WTC11 (cell line): ENCODE measurements at regions of chr10 and their contacts with region 1.

Region 1: DNA sequence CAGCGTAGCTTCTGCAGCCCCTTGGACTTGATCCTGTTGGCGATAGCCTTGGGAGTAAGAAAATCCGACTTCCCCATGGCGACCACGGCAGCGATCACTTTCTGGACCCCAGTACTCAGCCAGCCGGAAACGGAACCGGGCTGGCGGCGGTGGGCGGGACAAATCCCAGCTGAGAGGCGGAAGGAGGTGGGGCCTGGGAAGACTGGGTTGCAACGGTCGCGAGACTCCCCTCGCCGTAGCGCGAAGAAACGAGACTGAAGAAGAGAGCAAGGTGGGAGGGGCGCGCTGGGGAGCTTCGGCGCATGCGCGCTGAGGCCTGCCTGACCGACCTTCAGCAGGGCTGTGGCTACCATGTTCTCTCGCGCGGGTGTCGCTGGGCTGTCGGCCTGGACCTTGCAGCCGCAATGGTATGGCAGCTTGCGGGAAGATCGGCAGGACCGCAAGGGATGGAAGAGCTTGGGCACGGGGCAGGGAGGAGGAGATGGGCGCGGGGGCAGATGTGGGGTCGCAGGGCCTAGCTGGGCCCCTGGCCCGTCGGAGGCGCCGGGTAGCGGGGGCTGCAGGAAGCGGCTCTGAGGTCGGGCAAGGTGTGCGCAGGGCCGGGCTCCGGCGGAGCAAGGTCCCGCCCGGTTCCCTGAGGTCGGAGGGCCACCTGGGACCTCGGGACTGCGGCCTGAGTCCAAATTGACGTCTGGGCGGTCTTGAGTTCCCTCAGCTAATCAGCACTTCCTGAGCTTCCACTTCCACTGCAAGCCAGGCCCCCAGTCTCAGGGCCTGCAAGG is at the starts of genes ATP5F1C and KIN:
- DNase-seq: peak; percentile 98
- ATAC-seq: peak; percentile 97
- H3K4me3 Mint-ChIP-seq: no peak within 1 kb of the TSS
- H3K27ac Mint-ChIP-seq: peak within 1 kb of the TSS; percentile 77
- H3K4me1 Mint-ChIP-seq: peaks cover 22% of the 10 kb centered on the region
- H3K27me3 Mint-ChIP-seq: no peaks in the 10 kb centered on the region
- CTCF ChIP-seq: no peak
- total RNA-seq, gene ATP5F1C: 262 to 288 TPM (median 270 TPM) in 3 replicates
- total RNA-seq, gene KIN: 13.1 to 17.9 TPM (median 13.5 TPM) in 3 replicates

Region 2: DNA sequence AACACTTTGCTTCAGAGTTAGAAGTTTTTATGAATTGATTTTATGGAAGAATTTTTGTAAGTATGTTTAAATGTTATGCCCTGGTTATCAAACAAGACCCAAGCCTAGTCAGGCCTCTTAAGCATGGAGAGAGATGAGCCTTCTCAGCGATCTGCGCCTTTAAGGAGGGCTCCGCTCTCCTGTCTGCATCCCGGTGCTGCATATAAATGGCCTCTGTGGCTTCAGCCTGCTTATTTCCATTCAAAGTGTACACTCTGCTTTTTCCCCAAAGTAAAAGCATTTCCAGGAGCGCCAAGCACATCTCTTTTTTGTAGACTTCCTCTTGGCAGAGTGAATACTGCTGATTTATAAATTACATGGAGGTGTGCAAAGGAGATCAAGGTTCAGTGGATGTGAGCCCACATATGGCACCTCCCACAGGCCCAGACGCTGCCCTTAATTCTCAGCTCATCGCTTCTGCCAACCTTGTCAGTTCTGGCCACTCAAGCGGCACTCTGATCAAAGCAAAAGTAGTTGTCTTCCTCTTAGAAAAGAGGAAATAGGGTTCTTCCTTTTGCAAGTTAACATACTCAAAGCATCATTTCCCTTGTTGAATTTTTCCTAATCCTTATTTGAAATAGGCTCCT is 307.2 kb before region 1 on chr10:
- CTCF ChIA-PET with region 1: no interaction called
- POLR2A ChIA-PET with region 1: no interaction called
- DNase-seq: no peak
- ATAC-seq: no peak
- H3K4me3 Mint-ChIP-seq: no peak overlapping the region
- H3K27ac Mint-ChIP-seq: no peak overlapping the region
- H3K4me1 Mint-ChIP-seq: peaks cover 38% of the 10 kb centered on the region
- H3K27me3 Mint-ChIP-seq: no peaks in the 10 kb centered on the region
- CTCF ChIP-seq: no peak

Region 3: DNA sequence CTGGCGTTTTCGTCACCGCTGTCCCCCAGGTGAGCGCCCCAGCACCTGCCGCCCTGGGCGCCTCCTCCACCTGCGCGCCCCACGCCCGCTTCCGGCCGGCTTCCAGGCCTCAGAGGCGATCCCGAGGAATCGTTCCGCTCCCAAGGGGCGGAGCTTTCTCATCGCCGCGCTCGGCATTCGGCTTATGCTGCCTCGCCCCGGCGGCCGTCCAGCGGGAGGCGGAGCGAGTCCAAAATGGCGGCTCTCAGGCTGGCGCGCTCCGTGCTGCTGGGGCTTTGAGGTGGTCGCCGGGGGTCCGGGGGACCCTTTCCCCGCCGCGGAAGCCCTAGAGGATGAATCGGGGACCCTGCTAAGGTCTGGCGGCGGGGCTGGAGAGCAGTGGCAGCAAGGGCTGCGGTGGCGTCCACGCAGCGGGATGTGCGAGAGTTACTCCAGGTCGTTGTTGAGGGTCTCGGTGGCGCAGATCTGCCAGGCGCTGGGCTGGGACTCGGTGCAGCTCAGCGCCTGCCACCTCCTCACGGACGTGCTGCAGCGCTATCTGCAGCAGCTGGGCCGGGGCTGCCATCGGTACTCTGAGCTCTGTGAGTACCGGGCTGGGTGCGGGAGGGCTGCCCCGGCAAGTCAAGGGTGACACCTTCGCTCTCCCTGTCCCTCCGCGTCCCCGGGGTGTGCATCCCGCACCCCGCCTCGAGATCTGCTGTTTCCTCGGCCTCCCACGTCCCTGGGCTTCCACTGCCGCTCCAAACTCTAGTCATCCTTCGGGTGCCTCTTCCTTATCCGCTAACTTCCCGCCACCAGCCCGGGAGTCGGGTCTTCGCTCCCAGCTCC is 30.5 kb after region 1 on chr10 and contains the start of gene TAF3:
- CTCF ChIA-PET with region 1: interaction called, 9 read pairs
- POLR2A ChIA-PET with region 1: interaction called, 15 read pairs
- DNase-seq: peak; percentile 96
- ATAC-seq: peak; percentile 85
- H3K4me3 Mint-ChIP-seq: peak within 1 kb of the TSS; percentile 97
- H3K27ac Mint-ChIP-seq: peak within 1 kb of the TSS; percentile 94
- H3K4me1 Mint-ChIP-seq: peaks cover 20% of the 10 kb centered on the region
- H3K27me3 Mint-ChIP-seq: peaks cover 6% of the 10 kb centered on the region; the same call in 1 of the 2 replicates
- CTCF ChIP-seq: no peak
- total RNA-seq, gene TAF3: 8.0 to 8.9 TPM (median 8.1 TPM) in 3 replicates